ENCODE measurements at regions of chr6 and their contacts with region 1.

Region 1: GRCh38 chr6:52664186-52664990 is 6.5 kb upstream of the TMEM14A start:
- DNase-seq: peak; percentile 11 to 70 (median 29)
- ATAC-seq: peak; percentile 71
- H3K4me3 ChIP-seq: peak overlapping the region; percentile 60
- H3K4me3 Mint-ChIP-seq: no peak overlapping the region
- H3K27ac ChIP-seq: no peak overlapping the region
- H3K27ac Mint-ChIP-seq: no peak overlapping the region
- H3K4me1 ChIP-seq: peaks cover 11% of the 10 kb centered on the region
- H3K4me1 Mint-ChIP-seq: no peaks in the 10 kb centered on the region
- H3K27me3 ChIP-seq: peaks cover 4 to 6% of the 10 kb centered on the region in 2 experiments
- H3K27me3 Mint-ChIP-seq: no peaks in the 10 kb centered on the region
- CTCF ChIP-seq: no peak

Region 2: DNA sequence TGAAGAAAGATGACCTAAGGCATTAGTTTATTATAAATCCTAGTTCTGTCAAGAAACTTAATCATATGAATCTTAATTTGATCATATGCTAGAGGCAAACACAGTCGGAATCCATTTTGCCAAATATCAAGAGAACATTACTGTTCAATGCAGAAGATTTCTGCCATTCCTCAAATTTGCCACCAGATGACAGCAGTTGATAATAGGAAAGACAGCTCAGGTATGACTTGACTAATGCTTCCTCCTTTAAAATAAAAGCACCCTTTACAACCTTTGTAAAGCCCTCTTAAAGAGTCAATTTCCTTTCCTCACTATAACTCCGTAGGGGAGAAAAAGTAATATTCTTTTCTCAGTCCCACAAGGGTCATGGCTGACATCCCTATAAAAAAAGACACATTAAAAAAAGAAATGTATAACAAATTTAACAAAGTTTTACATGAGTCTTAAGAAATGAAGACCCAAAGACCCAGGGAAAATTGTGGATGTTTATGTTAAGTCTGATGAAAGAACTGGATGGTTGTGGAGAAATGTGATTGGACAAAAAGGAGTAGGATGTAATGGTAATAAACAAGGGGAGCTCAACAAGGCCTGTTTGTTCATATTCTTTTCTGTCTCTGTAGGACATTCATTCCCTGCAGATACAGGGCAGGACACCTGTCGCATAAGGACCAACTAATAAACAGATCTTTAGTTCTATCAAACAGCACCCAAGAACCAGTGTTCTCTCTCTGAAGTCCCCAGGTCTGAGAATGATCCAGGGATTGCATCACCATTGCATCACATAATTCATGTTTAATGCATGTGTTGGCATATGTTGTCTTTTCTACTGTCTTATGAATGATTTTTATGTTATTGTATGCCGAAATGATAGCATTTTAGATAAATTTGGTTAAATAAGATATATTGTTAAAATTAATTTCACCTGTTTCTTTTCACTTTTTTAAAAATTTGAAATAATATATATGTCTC is 501.2 kb before region 1 on chr6:
- CTCF ChIA-PET with region 1: no interaction called
- POLR2A ChIA-PET with region 1: no interaction called
- intact Hi-C with region 1: loop called (anchors 1 to 2 kb)
- DNase-seq: peak in 3 of 14 experiments; percentile 50 to 62 (median 60)
- ATAC-seq: peak; percentile 59
- H3K4me3 ChIP-seq: no peak overlapping the region
- H3K4me3 Mint-ChIP-seq: no peak overlapping the region
- H3K27ac ChIP-seq: no peak overlapping the region
- H3K27ac Mint-ChIP-seq: no peak overlapping the region
- H3K4me1 ChIP-seq: no peaks in the 10 kb centered on the region
- H3K4me1 Mint-ChIP-seq: no peaks in the 10 kb centered on the region
- H3K27me3 ChIP-seq: peaks cover 0 to 3% of the 10 kb centered on the region in 2 experiments
- H3K27me3 Mint-ChIP-seq: peaks cover 9% of the 10 kb centered on the region
- CTCF ChIP-seq: peak; percentile 58

Region 3: GRCh38 chr6:52361945-52362442 is 302.4 kb before region 1 on chr6 and contains the start of gene PAQR8:
- CTCF ChIA-PET with region 1: interaction called, 3 read pairs
- POLR2A ChIA-PET with region 1: no interaction called
- intact Hi-C with region 1: loop called in 1 of 2 experiments (anchors 5 kb)
- DNase-seq: peak; percentile 67 to 93 (median 78)
- ATAC-seq: peak; percentile 84
- H3K4me3 ChIP-seq: peak within 1 kb of the TSS; percentile 80
- H3K4me3 Mint-ChIP-seq: peak within 1 kb of the TSS; percentile 98
- H3K27ac ChIP-seq: peak within 1 kb of the TSS; percentile 81 to 88
- H3K27ac Mint-ChIP-seq: peak within 1 kb of the TSS; percentile 92
- H3K4me1 ChIP-seq: peaks cover 29% of the 10 kb centered on the region
- H3K4me1 Mint-ChIP-seq: peaks cover 53% of the 10 kb centered on the region
- H3K27me3 ChIP-seq: no peaks in the 10 kb centered on the region
- H3K27me3 Mint-ChIP-seq: no peaks in the 10 kb centered on the region
- CTCF ChIP-seq: no peak
- total RNA-seq, gene PAQR8: 1.8 to 1.9 TPM

Region 4: DNA sequence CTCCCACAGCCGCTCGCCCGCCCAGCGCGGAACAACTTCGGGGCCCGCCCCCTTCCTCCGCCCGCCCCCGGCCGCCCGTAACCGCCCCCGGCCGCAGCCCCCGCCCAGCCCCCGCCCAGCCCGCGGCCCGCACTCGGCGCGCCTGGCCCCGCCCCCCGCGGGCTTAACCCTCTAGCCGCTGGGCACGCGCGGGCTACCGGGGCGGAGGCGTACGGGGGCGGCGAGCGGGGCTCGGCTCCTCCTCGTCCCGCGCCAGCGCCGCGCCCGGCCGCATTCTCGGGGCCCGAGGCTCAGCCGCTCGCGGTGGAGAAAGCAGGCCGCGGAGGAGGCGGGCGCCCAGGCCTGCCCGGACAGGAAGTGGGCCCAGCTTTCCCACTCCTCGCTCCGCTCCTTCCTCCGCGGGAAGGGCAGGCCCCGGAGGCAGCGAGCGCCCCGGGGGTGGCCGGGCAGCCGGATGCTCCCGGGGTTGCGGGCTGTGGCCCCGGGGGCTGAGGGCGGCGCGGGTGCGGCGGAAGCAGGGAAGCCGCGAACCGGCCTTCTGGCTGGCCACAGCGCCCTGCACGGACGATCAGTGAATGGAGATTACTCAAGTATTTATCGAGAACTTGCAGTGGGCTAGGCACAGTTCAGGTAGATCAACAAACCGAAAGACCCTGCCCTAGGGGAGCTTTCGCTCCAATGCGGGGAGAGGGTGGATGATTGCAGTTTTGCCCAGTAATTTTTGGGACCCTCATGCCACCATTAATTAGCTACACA is 87.2 kb before region 1 on chr6 and contains the start of gene TRAM2:
- CTCF ChIA-PET with region 1: no interaction called
- POLR2A ChIA-PET with region 1: no interaction called
- intact Hi-C with region 1: loop called in 1 of 2 experiments (anchors 5 kb)
- DNase-seq: peak; percentile 61 to 92 (median 75)
- ATAC-seq: peak; percentile 67
- H3K4me3 ChIP-seq: peak within 1 kb of the TSS; percentile 69
- H3K4me3 Mint-ChIP-seq: peak within 1 kb of the TSS; percentile 86
- H3K27ac ChIP-seq: peak within 1 kb of the TSS in 1 of 2 donors; percentile 60
- H3K27ac Mint-ChIP-seq: peak within 1 kb of the TSS; percentile 86
- H3K4me1 ChIP-seq: peaks cover 39% of the 10 kb centered on the region
- H3K4me1 Mint-ChIP-seq: peaks cover 56% of the 10 kb centered on the region
- H3K27me3 ChIP-seq: no peaks in the 10 kb centered on the region
- H3K27me3 Mint-ChIP-seq: no peaks in the 10 kb centered on the region
- CTCF ChIP-seq: no peak
- total RNA-seq, gene TRAM2: 7.1 to 7.6 TPM

Region 5: GRCh38 chr6:53544470-53545308 is 880.3 kb after region 1 on chr6 and contains the start of gene GCLC:
- CTCF ChIA-PET with region 1: no interaction called
- POLR2A ChIA-PET with region 1: no interaction called
- intact Hi-C with region 1: loop called in 1 of 2 experiments (anchors 10 kb)
- DNase-seq: peak; percentile 71 to 95 (median 83)
- ATAC-seq: peak; percentile 60
- H3K4me3 ChIP-seq: peak within 1 kb of the TSS; percentile 54
- H3K4me3 Mint-ChIP-seq: peak within 1 kb of the TSS; percentile 99
- H3K27ac ChIP-seq: peak within 1 kb of the TSS in 1 of 2 donors; percentile 31
- H3K27ac Mint-ChIP-seq: peak within 1 kb of the TSS; percentile 69
- H3K4me1 ChIP-seq: peaks cover 43% of the 10 kb centered on the region
- H3K4me1 Mint-ChIP-seq: peaks cover 74% of the 10 kb centered on the region
- H3K27me3 ChIP-seq: no peaks in the 10 kb centered on the region
- H3K27me3 Mint-ChIP-seq: no peaks in the 10 kb centered on the region
- CTCF ChIP-seq: peak; percentile 67
- total RNA-seq, gene GCLC: 8.9 to 10.1 TPM

Measured in CD4-positive, alpha-beta T cell (primary cell).